Body of pancreas (tissue), 4 donors: ENCODE measurements at regions of chr1 and their contacts with region 1.

Region 1: DNA sequence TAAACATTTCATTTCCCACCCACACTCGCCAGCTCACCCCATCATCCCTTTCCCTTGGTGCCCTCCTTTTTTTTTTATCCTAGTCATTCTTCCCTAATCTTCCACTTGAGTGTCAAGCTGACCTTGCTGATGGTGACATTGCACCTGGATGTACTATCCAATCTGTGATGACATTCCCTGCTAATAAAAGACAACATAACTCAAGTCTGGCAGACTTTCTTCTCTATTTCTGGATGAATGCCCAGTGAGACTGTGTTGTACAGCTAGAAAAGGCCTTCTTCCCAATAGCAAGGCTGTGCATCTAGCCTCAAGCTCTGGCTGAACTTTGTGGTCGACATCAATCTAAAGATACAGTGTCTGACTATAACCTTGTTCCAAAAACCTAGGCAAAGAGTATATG is 6.4 kb downstream of the IL24 start:
- DNase-seq: no peak
- ATAC-seq: no peak
- H3K4me3 ChIP-seq: no peak overlapping the region
- H3K27ac ChIP-seq: no peak overlapping the region
- H3K4me1 ChIP-seq: peaks cover 6% of the 10 kb centered on the region
- H3K27me3 ChIP-seq: no peaks in the 10 kb centered on the region
- CTCF ChIP-seq: no peak
- POLR2A ChIP-seq: no peak

Region 2: GRCh38 chr1:206734499-206735142 is 169.0 kb before region 1 on chr1:
- intact Hi-C with region 1: loop called (anchors 5 kb)
- DNase-seq: peak; percentile 42 to 69 (median 60)
- ATAC-seq: peak; percentile 55
- H3K4me3 ChIP-seq: no peak overlapping the region
- H3K27ac ChIP-seq: no peak overlapping the region
- H3K4me1 ChIP-seq: peaks cover 24% of the 10 kb centered on the region
- H3K27me3 ChIP-seq: no peaks in the 10 kb centered on the region
- CTCF ChIP-seq: peak; percentile 44 to 75 (median 53)
- POLR2A ChIP-seq: no peak